Activated T-helper 1 cell treated with anti-CD3 and anti-CD28 coated beads, Interleukin-12 subunit alpha, Interleukin-12 subunit beta, Interleukin-2, Interleukin-4 antibody, amounts not matched to agents 30 ng/mL and 10 ng/mL and 1 ng/mL, durations not matched to agents 14 hours and 24 hours and 36 hours (primary cell): ENCODE measurements at regions of chr13 and their contacts with region 1.

Region 1: DNA sequence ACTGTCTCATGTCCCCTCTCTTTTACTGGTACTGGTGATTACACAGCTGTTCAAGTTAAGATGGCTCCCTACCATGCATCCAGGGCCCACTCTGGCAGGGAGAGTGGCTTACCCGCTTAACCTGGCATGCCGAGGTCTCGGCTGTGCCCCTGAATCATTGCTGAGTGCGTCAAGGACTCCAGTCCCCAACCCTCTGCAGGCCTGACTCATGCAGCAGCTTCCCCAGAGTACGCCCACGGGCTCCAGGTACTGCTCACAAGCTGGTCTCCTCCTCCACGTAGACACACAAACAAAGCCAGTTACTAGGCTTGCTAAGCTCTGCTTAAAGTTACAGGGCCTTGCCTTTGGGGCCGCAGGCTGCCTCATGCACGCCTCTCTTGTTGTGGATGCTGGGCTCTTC is 447.4 kb downstream of the COG6 start:
- DNase-seq: peak; percentile 51
- H3K4me3 Mint-ChIP-seq: peak overlapping the region; percentile 74
- H3K27ac Mint-ChIP-seq: peak overlapping the region; percentile 97
- H3K4me1 Mint-ChIP-seq: peaks cover 64% of the 10 kb centered on the region
- H3K27me3 Mint-ChIP-seq: no peaks in the 10 kb centered on the region

Region 2: GRCh38 chr13:40069173-40070044 is 33.4 kb before region 1 on chr13:
- intact Hi-C with region 1: loop called (anchors 2 kb)
- DNase-seq: peak; percentile 45
- H3K4me3 Mint-ChIP-seq: no peak overlapping the region
- H3K27ac Mint-ChIP-seq: no peak overlapping the region
- H3K4me1 Mint-ChIP-seq: peaks cover 37% of the 10 kb centered on the region
- H3K27me3 Mint-ChIP-seq: no peaks in the 10 kb centered on the region

Region 3: GRCh38 chr13:40149611-40150274 is 46.9 kb after region 1 on chr13:
- intact Hi-C with region 1: loop called (anchors 1 kb)
- DNase-seq: no peak
- H3K4me3 Mint-ChIP-seq: no peak overlapping the region
- H3K27ac Mint-ChIP-seq: no peak overlapping the region
- H3K4me1 Mint-ChIP-seq: peaks cover 67% of the 10 kb centered on the region
- H3K27me3 Mint-ChIP-seq: no peaks in the 10 kb centered on the region

Region 4: DNA sequence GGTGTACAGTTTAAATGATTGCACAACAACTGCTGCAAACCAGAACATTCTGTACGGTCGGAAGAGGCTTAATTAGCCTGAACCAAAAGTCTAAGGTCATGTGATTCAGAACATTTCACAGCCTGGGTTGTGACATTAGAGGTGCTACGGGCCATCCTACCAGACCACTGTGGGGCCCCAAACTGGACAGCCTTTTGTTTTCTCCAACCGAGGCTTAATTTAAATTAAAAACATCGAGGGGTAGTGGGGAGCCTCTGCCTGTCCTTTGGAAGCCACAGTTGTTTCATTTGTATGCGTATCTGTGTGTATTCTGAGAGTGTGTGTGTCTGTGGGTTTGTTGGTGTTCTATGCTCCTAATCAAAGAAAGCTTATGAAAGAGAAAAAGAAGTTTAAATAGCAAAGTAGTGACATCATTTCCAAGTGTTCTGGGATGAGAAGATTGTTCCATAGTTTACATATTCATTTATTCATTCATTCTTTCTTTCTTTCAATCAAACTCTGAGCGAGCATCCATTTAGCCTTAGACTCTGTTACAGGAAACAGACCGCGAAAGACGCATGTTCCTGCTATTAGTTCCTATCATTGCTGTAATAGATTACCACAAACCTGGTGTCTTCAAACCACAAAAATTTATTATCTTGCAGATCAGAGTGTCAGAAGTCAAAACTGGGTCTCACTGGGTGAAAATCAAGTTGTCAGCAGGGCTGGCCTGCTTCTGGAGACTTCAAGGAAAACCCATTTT is 118.8 kb after region 1 on chr13:
- intact Hi-C with region 1: loop called (anchors 1 kb)
- DNase-seq: no peak
- H3K4me3 Mint-ChIP-seq: peak overlapping the region; percentile 37
- H3K27ac Mint-ChIP-seq: peak overlapping the region; percentile 69
- H3K4me1 Mint-ChIP-seq: peaks cover 43% of the 10 kb centered on the region
- H3K27me3 Mint-ChIP-seq: no peaks in the 10 kb centered on the region

Region 5: DNA sequence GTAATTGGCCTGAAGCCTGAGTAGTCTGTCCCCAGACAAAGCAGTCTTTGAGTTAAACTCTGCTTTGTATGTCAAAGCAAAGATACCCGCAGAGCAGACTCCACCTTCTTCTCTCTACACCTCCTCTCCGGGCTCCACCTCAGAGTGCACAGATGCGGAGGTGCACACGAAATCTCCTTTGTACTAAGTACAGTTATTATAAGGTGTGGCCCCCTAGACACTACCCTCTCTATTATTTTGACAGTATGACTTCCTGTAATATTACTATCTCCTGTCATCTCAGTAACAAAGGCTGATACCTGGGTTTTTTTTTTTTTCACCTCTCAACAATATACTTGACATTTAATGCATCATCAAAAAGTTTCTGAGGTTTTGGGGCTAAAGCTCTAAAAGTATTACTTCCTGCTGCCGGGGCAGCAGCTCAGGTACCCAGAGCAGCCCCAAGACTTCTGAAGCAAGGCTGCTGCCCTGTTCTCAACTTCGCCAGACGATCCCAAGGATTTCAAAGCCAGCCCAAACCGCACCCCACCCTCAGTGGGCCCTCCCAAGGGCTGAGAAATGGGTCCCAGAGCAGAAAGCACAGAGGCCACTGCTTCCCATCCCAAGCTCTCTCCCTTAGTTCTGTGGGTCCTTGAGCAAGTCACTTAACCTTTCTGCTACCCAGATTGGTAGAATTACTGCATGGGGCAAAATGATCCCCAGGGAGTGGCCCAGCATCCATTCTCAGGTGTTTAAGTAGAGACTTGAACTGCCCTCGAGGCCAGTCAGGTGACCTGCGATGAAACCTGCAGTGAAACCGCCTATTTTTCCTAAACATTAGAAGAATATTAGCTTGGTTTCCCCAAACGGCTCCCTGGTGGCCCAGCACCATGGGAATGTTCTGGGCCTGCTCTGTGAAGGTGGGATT is 383.0 kb after region 1 on chr13:
- intact Hi-C with region 1: loop called (anchors 1 kb)
- DNase-seq: peak; percentile 50
- H3K4me3 Mint-ChIP-seq: peak overlapping the region; percentile 23
- H3K27ac Mint-ChIP-seq: peak overlapping the region; percentile 89
- H3K4me1 Mint-ChIP-seq: peaks cover 68% of the 10 kb centered on the region
- H3K27me3 Mint-ChIP-seq: no peaks in the 10 kb centered on the region